Activated T-helper 1 cell treated with anti-CD3 and anti-CD28 coated beads, Interleukin-12 subunit alpha, Interleukin-12 subunit beta, Interleukin-2, Interleukin-4 antibody, amounts not matched to agents 30 ng/mL and 10 ng/mL and 1 ng/mL, durations not matched to agents 14 hours and 24 hours and 36 hours (primary cell): ENCODE measurements at regions of chr14 and their contacts with region 1.

Region 1: DNA sequence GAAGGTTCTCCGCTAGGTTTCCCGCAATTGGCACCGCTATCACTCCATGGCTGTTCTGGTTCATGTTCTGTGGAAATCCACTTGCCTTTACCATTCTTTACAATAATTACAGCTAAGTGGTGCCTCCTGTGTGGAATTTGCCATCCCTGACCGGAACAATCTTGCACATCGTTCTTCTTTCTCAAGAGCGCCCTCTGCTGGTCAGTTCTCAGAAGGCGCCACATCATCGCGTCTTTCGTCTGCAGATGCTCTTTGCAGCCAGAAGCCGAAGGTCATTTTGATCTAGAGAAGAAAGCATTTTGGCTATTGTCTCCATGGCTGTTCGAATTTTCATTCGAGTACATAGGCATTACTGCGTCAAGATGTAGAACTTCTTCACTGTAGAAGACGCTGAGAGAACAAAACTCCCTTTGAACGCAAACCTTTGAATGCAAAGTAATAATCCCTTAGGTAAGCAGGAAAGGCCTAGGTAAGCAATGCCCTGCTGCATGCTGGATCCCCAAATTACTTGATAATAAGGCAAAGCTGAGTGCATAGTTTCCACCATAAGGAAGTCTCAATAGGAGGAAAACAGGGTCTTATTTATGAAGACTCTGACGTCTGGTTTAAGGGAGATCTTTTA is 10.1 kb upstream of the RTRAF start:
- DNase-seq: peak; percentile 70
- H3K4me3 Mint-ChIP-seq: no peak overlapping the region
- H3K27ac Mint-ChIP-seq: no peak overlapping the region
- H3K4me1 Mint-ChIP-seq: peaks cover 22% of the 10 kb centered on the region
- H3K27me3 Mint-ChIP-seq: peaks cover 2% of the 10 kb centered on the region

Region 2: GRCh38 chr14:51283402-51284085 is 695.7 kb before region 1 on chr14:
- intact Hi-C with region 1: loop called (anchors 5 kb)
- DNase-seq: no peak
- H3K4me3 Mint-ChIP-seq: no peak overlapping the region
- H3K27ac Mint-ChIP-seq: no peak overlapping the region
- H3K4me1 Mint-ChIP-seq: no peaks in the 10 kb centered on the region
- H3K27me3 Mint-ChIP-seq: no peaks in the 10 kb centered on the region

Region 3: DNA sequence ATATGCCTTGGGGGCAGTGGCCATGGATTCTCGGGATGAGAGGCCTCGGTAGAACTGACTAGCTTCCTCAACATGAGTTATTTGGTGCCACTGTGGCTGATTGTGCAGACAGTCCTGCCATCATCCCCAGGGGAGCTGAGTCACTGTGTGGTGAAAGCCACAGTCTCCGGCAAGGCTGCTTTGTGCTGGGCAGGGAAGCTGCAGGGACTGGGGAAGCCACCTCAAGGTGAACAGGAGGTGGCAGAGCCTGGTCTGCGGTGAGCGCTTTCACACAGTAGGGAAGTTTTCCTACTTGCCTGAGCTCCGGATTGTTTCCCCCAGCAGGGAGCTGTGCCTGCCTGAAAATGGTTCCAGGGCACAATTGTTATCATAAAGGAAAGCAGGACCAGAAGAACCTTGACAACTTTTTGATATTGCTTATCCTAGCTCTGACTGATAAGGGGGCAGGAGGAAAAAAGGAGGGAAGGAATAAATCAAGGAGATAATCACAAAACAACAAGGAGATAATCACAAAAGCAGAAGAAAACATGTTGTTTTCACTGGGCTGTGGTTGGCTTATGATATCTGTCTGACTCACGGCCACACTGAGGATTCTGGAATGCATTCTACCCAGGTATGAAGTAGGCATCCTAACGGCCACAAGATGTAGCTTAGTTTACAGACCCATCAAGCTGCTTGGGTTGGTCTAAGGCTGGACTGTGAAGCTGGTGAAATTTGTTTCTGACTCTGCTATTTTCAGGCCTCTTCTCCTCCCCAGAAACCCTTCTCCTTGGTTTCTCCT is 151.0 kb before region 1 on chr14:
- intact Hi-C with region 1: loop called (anchors 2 kb)
- DNase-seq: peak; percentile 57
- H3K4me3 Mint-ChIP-seq: no peak overlapping the region
- H3K27ac Mint-ChIP-seq: no peak overlapping the region
- H3K4me1 Mint-ChIP-seq: no peaks in the 10 kb centered on the region
- H3K27me3 Mint-ChIP-seq: peaks cover 4% of the 10 kb centered on the region